Transverse colon (tissue), 4 donors: ENCODE measurements at regions of chr1 and their contacts with region 1.

Region 1: GRCh38 chr1:199684686-199685273 is 342.7 kb upstream of the NR5A2 start:
- DNase-seq: peak; percentile 16
- H3K4me3 ChIP-seq: no peak overlapping the region
- H3K27ac ChIP-seq: no peak overlapping the region
- H3K4me1 ChIP-seq: peaks cover 0 to 5% (median 0%) of the 10 kb centered on the region in 4 donors
- H3K27me3 ChIP-seq: no peaks in the 10 kb centered on the region
- CTCF ChIP-seq: peak; percentile 57 to 79 (median 71)
- EP300 ChIP-seq: no peak
- POLR2A ChIP-seq: no peak

Region 2: DNA sequence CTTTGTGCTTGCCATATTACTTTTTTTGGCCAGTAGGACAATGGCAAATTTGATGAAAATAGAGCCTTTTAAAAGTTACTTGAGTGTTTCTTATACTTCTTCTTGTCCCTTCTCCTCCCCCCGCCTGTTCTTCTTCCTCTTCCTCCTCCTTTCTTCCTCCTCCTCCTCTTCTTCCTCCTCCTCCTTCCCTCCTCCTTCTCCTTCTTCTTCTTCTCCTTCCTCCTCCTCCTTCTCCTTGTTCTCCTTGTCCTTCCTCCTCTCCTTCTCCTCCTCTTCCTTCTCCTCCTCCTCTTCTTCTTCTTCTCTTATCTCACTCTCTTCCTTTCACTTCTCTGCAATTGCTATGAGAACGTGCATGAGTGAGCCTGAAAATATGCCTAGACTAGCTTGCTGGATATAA is 123.4 kb before region 1 on chr1:
- in situ Hi-C with region 1: no loop called
- intact Hi-C with region 1: no loop called
- DNase-seq: no peak
- H3K4me3 ChIP-seq: no peak overlapping the region
- H3K27ac ChIP-seq: no peak overlapping the region
- H3K4me1 ChIP-seq: no peaks in the 10 kb centered on the region
- H3K27me3 ChIP-seq: no peaks in the 10 kb centered on the region
- CTCF ChIP-seq: no peak
- EP300 ChIP-seq: no peak
- POLR2A ChIP-seq: no peak

Region 3: DNA sequence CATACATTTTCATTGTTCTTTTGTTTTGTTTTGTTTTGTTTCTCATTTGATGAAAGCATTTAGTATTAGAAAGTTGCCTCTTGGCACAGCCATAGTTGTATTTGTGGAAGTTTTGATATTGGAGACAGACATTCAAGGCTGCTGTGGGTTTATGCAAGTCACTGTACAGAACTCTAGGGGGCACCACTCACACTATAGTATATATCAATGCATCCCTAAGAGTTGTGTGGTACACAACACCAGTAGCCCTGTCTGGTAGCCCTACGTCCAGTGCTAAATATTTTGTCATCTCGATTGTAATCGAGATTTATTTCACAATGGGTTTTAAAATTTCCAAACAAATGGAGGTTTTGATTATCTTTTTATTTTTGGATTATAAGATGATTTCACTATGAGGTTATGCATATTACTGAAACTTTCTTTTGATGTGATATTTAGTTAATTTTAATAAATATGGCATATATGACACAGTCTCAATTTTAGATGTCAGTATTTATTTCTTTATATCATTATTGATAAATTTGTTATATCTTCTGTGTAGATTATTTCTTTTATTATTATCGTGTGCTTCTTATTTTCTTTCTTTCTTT is 455.0 kb after region 1 on chr1:
- in situ Hi-C with region 1: loop called in 1 of 4 experiments (anchors 25 kb)
- intact Hi-C with region 1: no loop called
- DNase-seq: no peak
- H3K4me3 ChIP-seq: no peak overlapping the region
- H3K27ac ChIP-seq: no peak overlapping the region
- H3K4me1 ChIP-seq: no peaks in the 10 kb centered on the region
- H3K27me3 ChIP-seq: no peaks in the 10 kb centered on the region
- CTCF ChIP-seq: peak; percentile 40 to 43 (median 42)
- EP300 ChIP-seq: no peak
- POLR2A ChIP-seq: no peak

Region 4: GRCh38 chr1:200302192-200302920 is 617.6 kb after region 1 on chr1:
- in situ Hi-C with region 1: loop called in 1 of 4 experiments (anchors 25 kb)
- intact Hi-C with region 1: no loop called
- DNase-seq: peak; percentile 51
- H3K4me3 ChIP-seq: peak overlapping the region; percentile 40 to 69 (median 48)
- H3K27ac ChIP-seq: peak overlapping the region in 3 of 4 donors; percentile 0 to 57 (median 27)
- H3K4me1 ChIP-seq: peaks cover 0 to 10% (median 6%) of the 10 kb centered on the region in 4 donors
- H3K27me3 ChIP-seq: no peaks in the 10 kb centered on the region
- CTCF ChIP-seq: no peak
- EP300 ChIP-seq: no peak
- POLR2A ChIP-seq: no peak

Region 5: DNA sequence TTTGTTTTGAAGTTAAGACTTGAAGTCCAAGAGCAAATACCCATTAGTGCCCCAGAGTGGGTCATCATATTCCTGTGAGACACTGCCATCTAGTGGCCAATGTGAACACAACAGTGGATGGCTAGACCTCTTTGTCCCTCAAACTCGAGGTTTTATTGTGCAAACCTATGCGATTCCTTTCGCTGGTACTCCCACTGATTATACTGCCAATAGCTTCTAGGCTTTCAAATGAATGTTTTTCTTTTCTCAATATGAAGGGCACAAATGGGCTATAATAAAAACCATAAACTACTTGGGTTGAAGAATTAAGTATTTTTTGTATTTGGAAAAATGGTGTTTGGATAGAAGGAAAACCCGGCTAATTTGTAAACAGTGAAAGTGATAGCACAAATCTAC is 825.4 kb after region 1 on chr1:
- in situ Hi-C with region 1: loop called in 1 of 4 experiments (anchors 10 kb)
- intact Hi-C with region 1: no loop called
- DNase-seq: peak; percentile 74
- H3K4me3 ChIP-seq: no peak overlapping the region
- H3K27ac ChIP-seq: no peak overlapping the region
- H3K4me1 ChIP-seq: peaks cover 0 to 7% (median 0%) of the 10 kb centered on the region in 4 donors
- H3K27me3 ChIP-seq: peaks cover 15% of the 10 kb centered on the region
- CTCF ChIP-seq: peak; percentile 82 to 98 (median 91)
- EP300 ChIP-seq: no peak
- POLR2A ChIP-seq: no peak